Mammary epithelial cell (primary cell): ENCODE measurements at regions of chrX and their contacts with region 1.

Region 1: GRCh38 chrX:13750204-13750603 is 15.7 kb downstream of the OFD1 start:
- DNase-seq: peak; percentile 60
- H3K4me3 ChIP-seq: no peak overlapping the region
- H3K27ac ChIP-seq: no peak overlapping the region
- H3K4me1 ChIP-seq: peaks cover 15% of the 10 kb centered on the region
- H3K27me3 ChIP-seq: no peaks in the 10 kb centered on the region
- CTCF ChIP-seq: peak; percentile 75 to 78

Region 2: DNA sequence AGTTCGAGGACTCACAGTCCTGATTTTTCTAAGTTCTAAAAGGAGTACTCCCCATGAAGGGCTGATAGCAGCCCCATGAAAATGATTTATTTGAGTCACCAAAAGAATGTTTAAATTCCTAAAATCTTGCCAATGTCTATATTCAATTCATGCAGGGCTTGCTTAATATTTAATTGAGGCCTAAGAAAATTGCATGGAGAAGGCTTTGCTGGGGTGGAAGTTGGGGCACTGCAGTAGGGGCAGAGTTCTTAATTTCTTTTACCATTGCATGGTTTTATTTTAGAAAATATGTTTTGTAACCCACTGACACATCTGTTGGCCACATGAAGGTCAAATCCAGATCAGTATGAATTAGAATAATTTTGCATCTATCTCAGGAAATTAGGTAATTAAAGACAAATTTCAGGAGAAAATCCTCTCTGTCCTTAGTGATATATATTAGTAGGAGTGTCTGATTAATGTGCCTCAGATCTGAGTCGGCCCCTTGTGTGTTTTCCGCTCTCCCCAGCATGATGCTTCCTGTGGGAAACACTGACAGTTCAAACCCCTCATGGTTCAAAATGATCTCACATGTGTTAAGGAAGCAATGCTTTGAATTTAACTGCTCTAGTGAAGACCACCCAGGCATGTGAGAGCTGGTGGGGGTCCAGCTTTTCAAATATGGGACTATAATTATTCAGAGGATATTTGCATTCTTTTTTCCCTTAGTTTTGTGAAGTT is 234.8 kb before region 1 on chrX:
- CTCF ChIA-PET with region 1: no interaction called
- dilution Hi-C with region 1: no loop called
- in situ Hi-C with region 1: loop called in 1 of 2 experiments (anchors 10 kb)
- intact Hi-C with region 1: loop called (anchors 5 kb)
- DNase-seq: no peak
- H3K4me3 ChIP-seq: no peak overlapping the region
- H3K27ac ChIP-seq: no peak overlapping the region
- H3K4me1 ChIP-seq: no peaks in the 10 kb centered on the region
- H3K27me3 ChIP-seq: no peaks in the 10 kb centered on the region
- CTCF ChIP-seq: no peak

Region 3: DNA sequence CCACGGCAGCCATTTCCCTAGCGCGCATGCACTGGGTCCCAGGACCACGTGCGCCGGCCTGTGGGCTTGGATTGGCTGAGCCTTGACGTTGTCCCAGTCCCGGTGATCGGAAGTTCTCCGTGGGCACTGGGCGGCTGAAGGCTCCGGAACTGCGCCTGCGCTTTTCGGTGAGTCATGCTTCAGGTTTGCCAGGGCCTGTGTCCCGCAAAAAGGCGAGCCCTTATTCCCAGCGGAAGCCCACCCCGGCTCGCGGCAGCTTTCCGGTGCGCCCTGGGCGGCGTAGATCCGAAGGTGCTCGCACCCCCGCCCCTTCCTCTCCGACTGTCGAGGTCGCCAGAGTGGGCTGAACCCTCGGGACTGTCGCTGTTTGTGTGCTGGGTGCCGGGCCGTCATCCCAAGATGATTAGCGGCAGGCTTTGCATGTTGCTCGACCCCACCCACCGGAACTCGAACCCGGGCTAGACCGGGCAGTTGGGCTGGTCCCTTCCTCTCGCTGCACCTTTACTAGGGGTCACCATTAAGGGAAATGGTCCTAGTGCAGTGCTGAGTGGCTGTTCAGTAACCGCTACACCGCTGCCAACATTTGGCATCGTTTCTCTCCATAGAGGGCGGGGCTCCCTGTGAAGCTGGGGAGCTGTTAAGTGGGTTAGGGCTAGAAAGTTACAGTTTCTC is 97.0 kb before region 1 on chrX and contains the start of gene TCEANC:
- CTCF ChIA-PET with region 1: no interaction called
- dilution Hi-C with region 1: no loop called
- in situ Hi-C with region 1: loop called (anchors 5 kb)
- intact Hi-C with region 1: loop called (anchors 1 kb)
- DNase-seq: peak; percentile 98
- H3K4me3 ChIP-seq: peak within 1 kb of the TSS; percentile 54 to 74 (median 70)
- H3K27ac ChIP-seq: peak within 1 kb of the TSS; percentile 82
- H3K4me1 ChIP-seq: peaks cover 11% of the 10 kb centered on the region
- H3K27me3 ChIP-seq: no peaks in the 10 kb centered on the region
- CTCF ChIP-seq: no peak
- total RNA-seq, gene TCEANC: 3.9 to 4.2 TPM

Region 4: DNA sequence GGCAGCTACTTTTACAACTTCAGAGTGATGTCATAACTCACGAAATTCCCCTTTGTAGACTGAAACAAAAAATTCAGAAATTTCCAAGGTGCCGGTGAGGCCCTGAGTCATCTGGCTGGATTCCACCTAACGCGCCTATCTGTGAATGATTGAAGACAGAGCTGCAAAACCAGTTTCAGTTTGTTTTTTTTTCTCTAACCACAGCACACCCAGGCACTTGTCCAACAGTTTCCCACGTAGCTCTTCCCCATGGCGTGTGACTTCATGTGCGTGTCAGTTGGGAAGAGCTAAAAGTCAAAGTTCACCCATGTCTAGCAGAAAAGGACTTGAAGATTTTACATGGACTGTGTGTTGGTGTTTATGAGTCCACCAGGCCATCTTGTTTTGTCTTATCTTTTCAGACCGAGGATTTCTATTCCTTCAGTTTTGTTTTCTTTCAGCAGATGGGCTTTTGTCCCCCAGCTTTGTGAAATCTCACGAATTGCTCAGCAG is 80.9 kb before region 1 on chrX:
- CTCF ChIA-PET with region 1: no interaction called
- dilution Hi-C with region 1: loop called (anchors 5 kb)
- in situ Hi-C with region 1: no loop called
- intact Hi-C with region 1: no loop called
- DNase-seq: peak; percentile 99
- H3K4me3 ChIP-seq: no peak overlapping the region
- H3K27ac ChIP-seq: peak overlapping the region; percentile 73
- H3K4me1 ChIP-seq: peaks cover 23% of the 10 kb centered on the region
- H3K27me3 ChIP-seq: no peaks in the 10 kb centered on the region
- CTCF ChIP-seq: no peak